AG04450 (cell line): ENCODE measurements at regions of chr19 and their contacts with region 1.

Region 1: GRCh38 chr19:15463861-15464371 is 428 bp downstream of the RASAL3 start:
- DNase-seq: no peak
- H3K4me3 ChIP-seq: no peak overlapping the region
- H3K27ac ChIP-seq: no peak overlapping the region
- H3K27me3 ChIP-seq: peaks cover 22% of the 10 kb centered on the region
- CTCF ChIP-seq: no peak

Region 2: GRCh38 chr19:15443838-15444237 is 20.1 kb before region 1 on chr19:
- CTCF ChIA-PET with region 1: no interaction called
- POLR2A ChIA-PET with region 1: no interaction called
- DNase-seq: no peak
- H3K4me3 ChIP-seq: no peak overlapping the region
- H3K27ac ChIP-seq: no peak overlapping the region
- H3K27me3 ChIP-seq: no peaks in the 10 kb centered on the region
- CTCF ChIP-seq: no peak

Region 3: DNA sequence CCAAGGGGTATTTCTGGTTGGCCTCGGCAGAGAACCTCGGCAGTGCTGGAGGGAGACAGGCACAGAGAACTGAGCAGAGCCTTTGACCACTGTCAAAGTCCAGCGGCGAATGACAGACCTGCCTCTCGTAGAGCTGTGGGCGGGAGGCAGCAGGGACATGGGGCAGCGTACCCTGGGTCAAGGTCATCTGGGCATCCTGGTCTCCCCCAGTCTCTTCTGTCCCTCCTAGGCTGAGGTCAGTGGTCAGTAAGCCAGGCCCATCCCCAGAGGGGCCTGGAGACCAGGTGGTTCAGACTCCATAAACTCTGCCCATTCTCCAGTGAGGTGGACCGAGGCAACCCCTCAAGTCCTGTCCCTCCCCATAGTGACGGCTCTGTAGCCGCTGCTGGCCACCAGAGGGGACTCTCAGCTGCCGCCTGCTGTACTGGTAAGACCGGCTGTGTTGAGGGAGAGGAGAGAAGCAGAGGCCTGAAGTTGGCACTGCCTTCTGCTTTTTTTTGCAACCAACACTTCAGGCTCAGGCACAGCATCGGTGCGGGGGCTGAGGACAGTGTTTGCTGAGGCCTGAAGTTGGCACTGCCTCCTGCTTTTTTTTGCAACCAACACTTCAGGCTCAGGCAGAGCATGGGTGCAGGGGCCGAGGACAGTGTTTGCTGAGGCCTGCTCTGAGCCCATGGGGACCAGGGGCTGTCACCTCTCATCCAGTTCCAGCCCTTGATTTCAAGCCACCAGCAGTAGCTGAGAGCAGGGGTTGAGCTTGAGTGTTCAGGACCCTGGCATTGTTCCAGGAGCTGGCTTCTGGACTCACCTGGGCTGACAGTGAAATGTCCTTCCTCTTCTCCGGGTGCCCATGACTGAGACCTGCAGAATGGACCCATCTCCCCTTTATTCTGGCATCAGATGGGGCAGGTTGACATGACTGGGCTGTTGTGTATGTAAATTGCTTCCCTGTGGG is 15.8 kb after region 1 on chr19 and contains the start of gene PGLYRP2:
- CTCF ChIA-PET with region 1: no interaction called
- POLR2A ChIA-PET with region 1: interaction called, 10 read pairs
- DNase-seq: no peak
- H3K4me3 ChIP-seq: no peak within 1 kb of the TSS
- H3K27ac ChIP-seq: no peak within 1 kb of the TSS
- H3K27me3 ChIP-seq: no peaks in the 10 kb centered on the region
- CTCF ChIP-seq: no peak
- polyA plus RNA-seq, gene PGLYRP2: not detected in 2 replicates